ENCODE measurements at regions of chr19 and their contacts with region 1.

Region 1: GRCh38 chr19:51938936-51939335 is 11.7 kb downstream of the ZNF613 start:
- DNase-seq: no peak
- H3K4me3 ChIP-seq: no peak overlapping the region
- H3K27ac ChIP-seq: no peak overlapping the region
- H3K4me1 ChIP-seq: no peaks in the 10 kb centered on the region
- H3K27me3 ChIP-seq: no peaks in the 10 kb centered on the region
- CTCF ChIP-seq: no peak
- POLR2A ChIP-seq: no peak

Region 2: DNA sequence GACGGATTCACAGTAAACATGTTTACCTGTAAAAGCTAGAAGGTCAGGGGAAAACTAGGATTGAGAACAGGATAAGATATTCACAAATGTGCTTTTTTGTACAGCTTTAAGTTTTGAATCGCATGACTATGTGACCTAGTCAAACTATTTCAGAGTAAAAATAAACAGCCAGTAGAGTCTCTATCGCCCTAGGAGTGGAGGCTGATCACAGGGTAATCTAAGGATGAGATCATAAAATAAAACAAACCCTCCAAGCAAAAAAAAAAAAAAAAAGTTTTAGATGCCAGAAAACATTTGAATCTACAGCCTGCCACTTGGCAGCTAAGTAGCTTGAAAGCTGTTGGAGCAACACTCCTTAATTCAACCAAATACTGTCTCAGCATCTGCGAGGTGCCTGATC is 20.9 kb after region 1 on chr19:
- intact Hi-C with region 1: loop called (anchors 1 kb)
- DNase-seq: no peak
- H3K4me3 ChIP-seq: no peak overlapping the region
- H3K27ac ChIP-seq: no peak overlapping the region
- H3K4me1 ChIP-seq: no peaks in the 10 kb centered on the region
- H3K27me3 ChIP-seq: no peaks in the 10 kb centered on the region
- CTCF ChIP-seq: no peak
- POLR2A ChIP-seq: no peak

Measured in vagina (tissue), 2 donors.